Activated naive CD4-positive, alpha-beta T cell treated with anti-CD3 and anti-CD28 coated beads, Interleukin-2, amount 10 ng/mL, durations not matched to agents 7 days and 5 days (primary cell): ENCODE measurements at regions of chr15 and their contacts with region 1.

Region 1: GRCh38 chr15:80776420-80777045 is 2.6 kb upstream of the CEMIP start:
- DNase-seq: peak; percentile 74
- H3K4me3 Mint-ChIP-seq: no peak overlapping the region
- H3K27ac Mint-ChIP-seq: no peak overlapping the region
- H3K4me1 Mint-ChIP-seq: peaks cover 14% of the 10 kb centered on the region
- H3K27me3 Mint-ChIP-seq: peaks cover 60% of the 10 kb centered on the region

Region 2: GRCh38 chr15:80455668-80456442 is 320.7 kb before region 1 on chr15:
- CTCF ChIA-PET with region 1: interaction called, 91 read pairs
- DNase-seq: peak; percentile 67
- H3K4me3 Mint-ChIP-seq: no peak overlapping the region
- H3K27ac Mint-ChIP-seq: no peak overlapping the region
- H3K4me1 Mint-ChIP-seq: no peaks in the 10 kb centered on the region
- H3K27me3 Mint-ChIP-seq: peaks cover 29% of the 10 kb centered on the region

Region 3: GRCh38 chr15:80567721-80568157 is 208.8 kb before region 1 on chr15:
- CTCF ChIA-PET with region 1: interaction called, 78 read pairs
- DNase-seq: peak; percentile 30
- H3K4me3 Mint-ChIP-seq: no peak overlapping the region
- H3K27ac Mint-ChIP-seq: no peak overlapping the region
- H3K4me1 Mint-ChIP-seq: no peaks in the 10 kb centered on the region
- H3K27me3 Mint-ChIP-seq: peaks cover 34% of the 10 kb centered on the region

Region 4: DNA sequence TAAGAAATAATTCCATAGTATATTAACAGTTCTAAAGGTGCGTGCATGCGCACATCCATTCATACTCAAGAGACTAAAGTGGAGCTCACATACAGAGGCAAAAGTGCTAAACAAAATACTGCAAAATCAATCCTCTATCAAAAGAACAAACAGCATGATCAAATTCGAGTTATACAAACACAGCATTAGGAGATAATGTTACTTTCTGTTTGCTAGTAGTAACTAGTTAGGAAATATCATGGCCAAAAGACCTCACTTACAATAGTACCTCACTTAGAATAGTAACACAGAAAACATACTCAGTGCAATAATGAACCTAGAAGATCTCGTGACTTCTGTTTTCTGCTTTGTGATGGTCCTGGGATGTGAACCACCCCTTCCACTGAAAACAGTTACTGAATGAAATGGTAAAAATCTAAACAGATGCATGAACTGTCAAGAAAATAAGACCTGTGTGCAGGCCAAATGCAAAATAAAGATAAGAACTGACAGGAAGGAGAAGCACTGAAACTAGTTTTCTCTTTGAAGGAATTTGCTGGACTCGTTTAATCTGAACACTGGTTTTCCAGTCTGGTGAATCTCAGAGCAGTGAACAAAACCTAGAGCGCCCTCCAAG is 18.3 kb before region 1 on chr15:
- CTCF ChIA-PET with region 1: no interaction called
- DNase-seq: no peak
- H3K4me3 Mint-ChIP-seq: no peak overlapping the region
- H3K27ac Mint-ChIP-seq: no peak overlapping the region
- H3K4me1 Mint-ChIP-seq: no peaks in the 10 kb centered on the region
- H3K27me3 Mint-ChIP-seq: no peaks in the 10 kb centered on the region